Naive thymus-derived CD4-positive, alpha-beta T cell (primary cell): ENCODE measurements at regions of chr12 and their contacts with region 1.

Region 1: GRCh38 chr12:14995583-14996425 is 23.0 kb downstream of the PDE6H start:
- DNase-seq: peak in 7 of 9 donors; percentile 27 to 76 (median 58)
- ATAC-seq: peak; percentile 84
- H3K4me3 ChIP-seq: no peak overlapping the region
- H3K4me3 Mint-ChIP-seq: peak overlapping the region in 8 of 10 donors; percentile 9 to 73 (median 62)
- H3K27ac ChIP-seq: peak overlapping the region; percentile 14
- H3K27ac Mint-ChIP-seq: peak overlapping the region; percentile 6 to 93 (median 88)
- H3K4me1 ChIP-seq: peaks cover 16 to 27% of the 10 kb centered on the region in 2 donors
- H3K4me1 Mint-ChIP-seq: peaks cover 21 to 35% (median 31%) of the 10 kb centered on the region in 7 donors
- H3K27me3 ChIP-seq: peaks cover 0 to 4% of the 10 kb centered on the region in 2 donors
- H3K27me3 Mint-ChIP-seq: peaks cover 0 to 32% (median 0%) of the 10 kb centered on the region in 5 donors

Region 2: GRCh38 chr12:13853471-13853870 is 1142.3 kb before region 1 on chr12:
- CTCF ChIA-PET with region 1: no interaction called
- POLR2A ChIA-PET with region 1: no interaction called
- intact Hi-C with region 1: no loop called
- DNase-seq: no peak
- ATAC-seq: no peak
- H3K4me3 ChIP-seq: no peak overlapping the region
- H3K4me3 Mint-ChIP-seq: no peak overlapping the region
- H3K27ac ChIP-seq: no peak overlapping the region
- H3K27ac Mint-ChIP-seq: no peak overlapping the region
- H3K4me1 ChIP-seq: no peaks in the 10 kb centered on the region
- H3K4me1 Mint-ChIP-seq: peaks cover 0 to 1% (median 0%) of the 10 kb centered on the region in 7 donors
- H3K27me3 ChIP-seq: no peaks in the 10 kb centered on the region
- H3K27me3 Mint-ChIP-seq: peaks cover 0 to 10% (median 0%) of the 10 kb centered on the region in 5 donors

Region 3: DNA sequence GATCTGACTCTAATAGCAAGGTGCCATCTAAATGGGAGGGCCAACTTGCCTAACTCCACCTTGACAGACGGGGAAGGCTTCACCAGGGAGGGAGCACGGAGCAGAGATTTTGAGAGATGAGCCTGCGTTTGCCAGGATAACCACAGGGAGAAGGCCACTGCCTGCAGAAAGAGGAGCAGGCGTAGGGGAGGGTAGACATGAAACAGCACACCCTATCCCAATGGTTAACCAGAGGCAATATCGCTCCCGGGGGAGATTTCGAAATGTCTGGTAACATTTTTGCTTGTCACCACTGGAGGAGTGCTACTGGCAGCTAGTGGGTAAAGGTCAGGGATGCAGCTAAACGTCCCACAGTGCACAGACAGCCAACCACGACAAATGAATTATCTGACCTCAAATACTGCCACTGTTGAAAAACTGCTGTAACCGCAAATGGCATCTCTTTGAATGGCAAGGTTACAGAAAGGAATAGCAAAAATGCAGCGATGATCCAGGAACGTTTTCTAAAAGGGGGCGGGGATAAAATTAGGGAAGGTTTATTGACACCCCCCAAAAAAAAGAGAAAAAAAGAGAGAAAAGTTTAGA is 756.4 kb before region 1 on chr12:
- CTCF ChIA-PET with region 1: no interaction called
- POLR2A ChIA-PET with region 1: no interaction called
- intact Hi-C with region 1: loop called in 1 of 2 experiments (anchors 10 kb)
- DNase-seq: peak in 2 of 9 donors; percentile 12 to 40
- ATAC-seq: peak; percentile 69
- H3K4me3 ChIP-seq: peak overlapping the region; percentile 52
- H3K4me3 Mint-ChIP-seq: peak overlapping the region; percentile 75 to 90 (median 82)
- H3K27ac ChIP-seq: peak overlapping the region; percentile 1
- H3K27ac Mint-ChIP-seq: peak overlapping the region; percentile 37 to 93 (median 87)
- H3K4me1 ChIP-seq: peaks cover 0 to 6% of the 10 kb centered on the region in 2 donors
- H3K4me1 Mint-ChIP-seq: peaks cover 17 to 29% (median 22%) of the 10 kb centered on the region in 7 donors
- H3K27me3 ChIP-seq: no peaks in the 10 kb centered on the region
- H3K27me3 Mint-ChIP-seq: no peaks in the 10 kb centered on the region

Region 4: GRCh38 chr12:14723763-14724162 is 272.0 kb before region 1 on chr12:
- CTCF ChIA-PET with region 1: interaction called, 5 read pairs
- POLR2A ChIA-PET with region 1: no interaction called
- intact Hi-C with region 1: loop called (anchors 1 kb)
- DNase-seq: peak; percentile 19 to 67 (median 59)
- ATAC-seq: peak; percentile 83
- H3K4me3 ChIP-seq: no peak overlapping the region
- H3K4me3 Mint-ChIP-seq: no peak overlapping the region
- H3K27ac ChIP-seq: no peak overlapping the region
- H3K27ac Mint-ChIP-seq: no peak overlapping the region
- H3K4me1 ChIP-seq: no peaks in the 10 kb centered on the region
- H3K4me1 Mint-ChIP-seq: peaks cover 0 to 4% (median 0%) of the 10 kb centered on the region in 7 donors
- H3K27me3 ChIP-seq: no peaks in the 10 kb centered on the region
- H3K27me3 Mint-ChIP-seq: peaks cover 0 to 34% (median 10%) of the 10 kb centered on the region in 5 donors

Region 5: DNA sequence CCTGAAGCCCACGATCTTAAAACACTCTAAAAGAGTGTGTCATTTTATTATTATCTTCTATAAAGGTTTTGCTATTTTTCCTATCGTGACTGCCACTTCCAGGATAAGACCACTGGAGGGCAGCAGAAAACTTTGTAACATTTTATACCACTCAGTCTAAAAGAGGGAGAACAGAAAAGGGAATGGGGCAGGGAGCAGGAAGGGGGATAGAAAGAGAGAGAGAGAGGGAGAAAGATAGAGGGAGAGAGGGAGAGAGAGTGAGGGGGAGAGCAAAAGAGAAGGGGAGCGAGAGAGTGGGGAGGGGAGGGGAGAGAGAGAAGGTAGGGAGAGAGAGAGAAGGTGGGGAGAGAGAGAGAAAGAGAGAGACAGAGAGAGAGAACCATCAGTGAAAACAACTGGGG is 150.5 kb before region 1 on chr12:
- CTCF ChIA-PET with region 1: interaction called, 86 read pairs
- POLR2A ChIA-PET with region 1: interaction called, 27 read pairs
- intact Hi-C with region 1: loop called (anchors 1 kb)
- DNase-seq: peak in 7 of 9 donors; percentile 23 to 63 (median 59)
- ATAC-seq: peak; percentile 80
- H3K4me3 ChIP-seq: no peak overlapping the region
- H3K4me3 Mint-ChIP-seq: peak overlapping the region in 7 of 10 donors; percentile 1 to 71 (median 27)
- H3K27ac ChIP-seq: no peak overlapping the region
- H3K27ac Mint-ChIP-seq: peak overlapping the region in 6 of 9 donors; percentile 14 to 68 (median 38)
- H3K4me1 ChIP-seq: no peaks in the 10 kb centered on the region
- H3K4me1 Mint-ChIP-seq: peaks cover 5 to 13% (median 8%) of the 10 kb centered on the region in 7 donors
- H3K27me3 ChIP-seq: no peaks in the 10 kb centered on the region
- H3K27me3 Mint-ChIP-seq: peaks cover 0 to 12% (median under 1%) of the 10 kb centered on the region in 5 donors

Region 6: GRCh38 chr12:14948672-14949071 is 47.1 kb before region 1 on chr12:
- CTCF ChIA-PET with region 1: interaction called, 9 read pairs
- POLR2A ChIA-PET with region 1: interaction called, 8 read pairs
- intact Hi-C with region 1: loop called in 1 of 2 experiments (anchors 2 kb)
- DNase-seq: peak in 8 of 9 donors; percentile 34 to 87 (median 81)
- ATAC-seq: peak; percentile 88
- H3K4me3 ChIP-seq: peak overlapping the region; percentile 47
- H3K4me3 Mint-ChIP-seq: peak overlapping the region; percentile 72 to 97 (median 90)
- H3K27ac ChIP-seq: peak overlapping the region; percentile 96
- H3K27ac Mint-ChIP-seq: peak overlapping the region; percentile 87 to 99 (median 97)
- H3K4me1 ChIP-seq: peaks cover 77 to 79% of the 10 kb centered on the region in 2 donors
- H3K4me1 Mint-ChIP-seq: peaks cover 69 to 95% (median 91%) of the 10 kb centered on the region in 7 donors
- H3K27me3 ChIP-seq: no peaks in the 10 kb centered on the region
- H3K27me3 Mint-ChIP-seq: no peaks in the 10 kb centered on the region

Region 7: GRCh38 chr12:15220994-15221885 is 225.4 kb after region 1 on chr12 and contains the start of gene RERG:
- CTCF ChIA-PET with region 1: interaction called, 12 read pairs
- POLR2A ChIA-PET with region 1: no interaction called
- intact Hi-C with region 1: loop called (anchors 1 to 5 kb)
- DNase-seq: peak; percentile 57 to 86 (median 77)
- ATAC-seq: peak; percentile 99
- H3K4me3 ChIP-seq: peak within 1 kb of the TSS; percentile 43
- H3K4me3 Mint-ChIP-seq: peak within 1 kb of the TSS; percentile 61 to 83 (median 78)
- H3K27ac ChIP-seq: no peak within 1 kb of the TSS
- H3K27ac Mint-ChIP-seq: no peak within 1 kb of the TSS
- H3K4me1 ChIP-seq: peaks cover 6% of the 10 kb centered on the region in 2 donors
- H3K4me1 Mint-ChIP-seq: peaks cover 0 to 17% (median 9%) of the 10 kb centered on the region in 7 donors
- H3K27me3 ChIP-seq: no peaks in the 10 kb centered on the region
- H3K27me3 Mint-ChIP-seq: peaks cover 25 to 43% (median 32%) of the 10 kb centered on the region in 5 donors
- total RNA-seq, gene RERG: 0.35 TPM in 1 of 5 experiments, not detected in the others